Activated CD4-positive, alpha-beta T cell treated with anti-CD3 and anti-CD28 coated beads for 36 hours (primary cell): ENCODE measurements at regions of chr17 and their contacts with region 1.

Region 1: DNA sequence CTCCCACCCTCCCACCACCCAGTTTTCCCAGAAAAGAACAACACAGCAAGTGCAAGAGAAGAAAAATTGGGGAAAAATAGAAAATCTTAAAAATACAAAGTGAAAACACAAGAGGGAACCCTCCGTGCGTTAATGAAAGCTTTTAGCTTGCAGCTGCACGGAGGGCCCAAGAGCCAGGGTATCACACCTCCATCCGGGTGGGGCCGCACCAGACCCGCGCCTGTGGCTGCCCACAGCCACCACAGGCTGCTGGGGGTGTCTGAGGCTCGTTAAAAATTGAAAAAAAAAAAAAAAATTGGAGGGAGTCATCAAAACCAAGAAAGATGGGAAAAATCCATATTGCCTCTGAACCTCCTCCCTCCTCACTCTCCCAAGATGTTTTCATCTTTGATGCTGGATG is 18.6 kb downstream of the ENGASE start:
- DNase-seq: no peak
- ATAC-seq: no peak
- H3K4me3 Mint-ChIP-seq: no peak overlapping the region
- H3K27ac Mint-ChIP-seq: no peak overlapping the region
- H3K4me1 Mint-ChIP-seq: peaks cover 3% of the 10 kb centered on the region
- H3K27me3 Mint-ChIP-seq: peaks cover 25% of the 10 kb centered on the region

Region 2: GRCh38 chr17:79177877-79178276 is 84.6 kb after region 1 on chr17:
- CTCF ChIA-PET with region 1: no interaction called
- POLR2A ChIA-PET with region 1: interaction called, 14 read pairs
- intact Hi-C with region 1: no loop called
- DNase-seq: no peak
- ATAC-seq: no peak
- H3K4me3 Mint-ChIP-seq: no peak overlapping the region
- H3K27ac Mint-ChIP-seq: no peak overlapping the region
- H3K4me1 Mint-ChIP-seq: no peaks in the 10 kb centered on the region
- H3K27me3 Mint-ChIP-seq: peaks cover 11% of the 10 kb centered on the region